SK-N-SH (cell line): ENCODE measurements at regions of chr6 and their contacts with region 1.

Region 1: GRCh38 chr6:152484806-152485205 is 152.4 kb downstream of the SYNE1 start:
- DNase-seq: no peak
- H3K4me3 ChIP-seq: no peak overlapping the region
- H3K27ac ChIP-seq: no peak overlapping the region
- H3K4me1 ChIP-seq: no peaks in the 10 kb centered on the region
- H3K27me3 ChIP-seq: no peaks in the 10 kb centered on the region
- CTCF ChIP-seq: no peak
- EP300 ChIP-seq: no peak
- RAD21 ChIP-seq: no peak

Region 2: DNA sequence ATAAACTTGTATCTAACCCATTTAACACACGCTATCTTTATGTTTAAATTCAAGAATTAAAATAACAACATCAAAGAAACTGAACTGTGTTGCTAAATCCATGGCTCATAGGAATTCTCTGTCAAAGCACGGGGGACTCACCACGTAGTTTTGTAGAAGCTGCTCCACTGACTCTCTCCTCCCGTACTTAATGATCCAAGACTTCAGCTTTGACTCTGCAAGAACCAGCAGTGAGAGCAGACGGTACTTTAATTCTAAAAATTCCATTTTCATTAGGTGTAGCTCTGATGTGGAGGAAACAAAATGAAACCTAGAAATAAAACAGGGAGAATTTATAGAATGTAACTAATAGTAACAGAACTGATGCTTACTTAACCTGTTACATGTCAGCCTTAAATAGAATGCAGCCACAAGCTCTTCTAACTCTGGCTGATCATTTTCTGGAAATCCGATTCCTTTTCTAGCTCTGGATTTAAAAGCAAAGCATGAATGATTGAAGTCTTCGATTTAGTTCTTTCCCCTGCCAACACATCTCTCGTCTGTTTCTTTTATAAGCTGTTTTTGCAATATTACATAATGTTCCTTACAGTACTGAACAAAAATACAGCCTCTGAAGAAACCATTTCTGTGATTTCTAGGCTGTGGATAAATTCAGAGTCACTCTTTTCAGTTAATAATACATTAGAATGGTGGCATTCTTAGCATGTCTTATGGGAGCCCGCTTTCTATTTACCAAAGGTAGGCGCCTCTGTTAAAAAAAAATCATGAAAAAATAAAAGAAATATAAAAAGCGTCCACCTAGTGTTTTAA is 13.1 kb before region 1 on chr6:
- CTCF ChIA-PET with region 1: interaction called, 10 read pairs
- POLR2A ChIA-PET with region 1: no interaction called
- DNase-seq: no peak
- H3K4me3 ChIP-seq: peak overlapping the region; percentile 3 to 39; a peak in 2 of 4 replicates
- H3K27ac ChIP-seq: peak overlapping the region; percentile 67 to 79
- H3K4me1 ChIP-seq: no peaks in the 10 kb centered on the region; a peak in 1 of 4 replicates
- H3K27me3 ChIP-seq: no peaks in the 10 kb centered on the region
- CTCF ChIP-seq: peak; percentile 8; the same call in 1 of the 2 replicates
- EP300 ChIP-seq: no peak
- RAD21 ChIP-seq: no peak

Region 3: DNA sequence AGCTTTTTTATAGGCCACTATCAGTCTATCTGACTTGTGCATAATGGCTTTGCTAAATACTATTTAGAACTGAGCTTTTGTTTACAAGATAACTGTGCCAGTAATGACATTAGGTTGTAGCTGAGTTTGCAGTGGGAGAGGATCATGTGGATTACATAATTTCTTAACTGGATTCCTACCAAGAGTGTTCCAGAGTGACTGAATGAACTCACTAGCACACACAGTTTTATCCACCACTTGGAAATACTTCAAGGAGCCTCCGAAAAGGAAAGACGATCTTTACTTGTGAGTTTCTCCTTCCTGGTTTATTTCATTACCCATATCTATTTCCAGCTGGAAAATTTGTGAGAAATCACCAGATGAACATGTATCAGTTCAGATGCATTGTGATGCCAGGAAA is 163.3 kb after region 1 on chr6:
- CTCF ChIA-PET with region 1: interaction called, 31 read pairs
- POLR2A ChIA-PET with region 1: no interaction called
- DNase-seq: no peak
- H3K4me3 ChIP-seq: no peak overlapping the region
- H3K27ac ChIP-seq: no peak overlapping the region
- H3K4me1 ChIP-seq: no peaks in the 10 kb centered on the region; a peak in 2 of 4 replicates
- H3K27me3 ChIP-seq: no peaks in the 10 kb centered on the region
- CTCF ChIP-seq: no peak
- EP300 ChIP-seq: no peak
- RAD21 ChIP-seq: no peak

Region 4: GRCh38 chr6:152669895-152670294 is 185.1 kb after region 1 on chr6:
- CTCF ChIA-PET with region 1: interaction called, 13 read pairs
- POLR2A ChIA-PET with region 1: no interaction called
- DNase-seq: peak; percentile 27
- H3K4me3 ChIP-seq: no peak overlapping the region
- H3K27ac ChIP-seq: peak overlapping the region in 1 of 2 experiments; percentile 92; a peak in 2 of 4 replicates
- H3K4me1 ChIP-seq: peaks cover 0 to 9% of the 10 kb centered on the region in 2 experiments; a peak in 2 of 4 replicates
- H3K27me3 ChIP-seq: no peaks in the 10 kb centered on the region
- CTCF ChIP-seq: peak; percentile 69
- EP300 ChIP-seq: no peak
- RAD21 ChIP-seq: peak; percentile 78